Naive thymus-derived CD4-positive, alpha-beta T cell (primary cell): ENCODE measurements at regions of chr3 and their contacts with region 1.

Region 1: DNA sequence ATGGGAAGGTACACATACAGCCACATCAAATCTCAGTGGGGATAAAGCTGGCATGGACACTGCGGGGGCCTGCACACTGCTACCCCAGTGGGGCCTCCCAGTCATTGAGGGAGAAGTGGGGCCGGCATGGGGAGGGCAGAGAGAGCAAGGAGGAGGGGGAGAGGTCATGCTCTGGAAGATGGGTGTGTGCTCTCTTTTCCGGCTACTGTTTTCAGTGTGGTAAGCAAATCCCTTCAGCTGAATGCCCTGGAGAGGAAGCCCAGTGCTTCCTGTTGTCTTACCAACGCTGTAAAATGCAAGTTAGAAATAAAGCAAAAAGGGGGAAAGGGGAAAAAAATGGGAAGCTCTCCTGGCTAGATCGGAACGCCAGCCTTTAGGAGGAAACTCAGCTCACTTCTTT is 30.8 kb downstream of the NRROS start:
- DNase-seq: no peak
- ATAC-seq: peak; percentile 31
- H3K4me3 ChIP-seq: no peak overlapping the region
- H3K4me3 Mint-ChIP-seq: peak overlapping the region; percentile 58 to 79 (median 66)
- H3K27ac ChIP-seq: peak overlapping the region; percentile 34
- H3K27ac Mint-ChIP-seq: peak overlapping the region; percentile 74 to 95 (median 85)
- H3K4me1 ChIP-seq: peaks cover 0 to 7% of the 10 kb centered on the region in 2 donors
- H3K4me1 Mint-ChIP-seq: peaks cover 13 to 41% (median 28%) of the 10 kb centered on the region in 7 donors
- H3K27me3 ChIP-seq: no peaks in the 10 kb centered on the region
- H3K27me3 Mint-ChIP-seq: no peaks in the 10 kb centered on the region

Region 2: GRCh38 chr3:196632046-196632751 is 38.1 kb before region 1 on chr3:
- CTCF ChIA-PET with region 1: no interaction called
- POLR2A ChIA-PET with region 1: interaction called, 18 read pairs
- intact Hi-C with region 1: loop called in 1 of 2 experiments (anchors 5 kb)
- DNase-seq: peak; percentile 69 to 91 (median 88)
- ATAC-seq: peak; percentile 89
- H3K4me3 ChIP-seq: peak overlapping the region; percentile 48
- H3K4me3 Mint-ChIP-seq: peak overlapping the region; percentile 80 to 96 (median 90)
- H3K27ac ChIP-seq: peak overlapping the region; percentile 78
- H3K27ac Mint-ChIP-seq: peak overlapping the region; percentile 93 to 99 (median 97)
- H3K4me1 ChIP-seq: peaks cover 30 to 31% of the 10 kb centered on the region in 2 donors
- H3K4me1 Mint-ChIP-seq: peaks cover 31 to 74% (median 62%) of the 10 kb centered on the region in 7 donors
- H3K27me3 ChIP-seq: no peaks in the 10 kb centered on the region
- H3K27me3 Mint-ChIP-seq: no peaks in the 10 kb centered on the region

Region 3: GRCh38 chr3:196639483-196640296 is 30.6 kb before region 1 on chr3 and contains the start of gene NRROS:
- CTCF ChIA-PET with region 1: interaction called, 4 read pairs
- POLR2A ChIA-PET with region 1: interaction called, 12 read pairs
- intact Hi-C with region 1: loop called in 1 of 2 experiments (anchors 5 kb)
- DNase-seq: peak; percentile 25 to 71 (median 46)
- ATAC-seq: peak; percentile 70
- H3K4me3 ChIP-seq: peak within 1 kb of the TSS; percentile 75
- H3K4me3 Mint-ChIP-seq: peak within 1 kb of the TSS; percentile 75 to 94 (median 92)
- H3K27ac ChIP-seq: peak within 1 kb of the TSS; percentile 79
- H3K27ac Mint-ChIP-seq: peak within 1 kb of the TSS; percentile 74 to 95 (median 92)
- H3K4me1 ChIP-seq: peaks cover 27 to 36% of the 10 kb centered on the region in 2 donors
- H3K4me1 Mint-ChIP-seq: peaks cover 49 to 92% (median 71%) of the 10 kb centered on the region in 7 donors
- H3K27me3 ChIP-seq: no peaks in the 10 kb centered on the region
- H3K27me3 Mint-ChIP-seq: no peaks in the 10 kb centered on the region
- total RNA-seq, gene NRROS: 9.8 to 53.3 (median 14.2) TPM

Region 4: DNA sequence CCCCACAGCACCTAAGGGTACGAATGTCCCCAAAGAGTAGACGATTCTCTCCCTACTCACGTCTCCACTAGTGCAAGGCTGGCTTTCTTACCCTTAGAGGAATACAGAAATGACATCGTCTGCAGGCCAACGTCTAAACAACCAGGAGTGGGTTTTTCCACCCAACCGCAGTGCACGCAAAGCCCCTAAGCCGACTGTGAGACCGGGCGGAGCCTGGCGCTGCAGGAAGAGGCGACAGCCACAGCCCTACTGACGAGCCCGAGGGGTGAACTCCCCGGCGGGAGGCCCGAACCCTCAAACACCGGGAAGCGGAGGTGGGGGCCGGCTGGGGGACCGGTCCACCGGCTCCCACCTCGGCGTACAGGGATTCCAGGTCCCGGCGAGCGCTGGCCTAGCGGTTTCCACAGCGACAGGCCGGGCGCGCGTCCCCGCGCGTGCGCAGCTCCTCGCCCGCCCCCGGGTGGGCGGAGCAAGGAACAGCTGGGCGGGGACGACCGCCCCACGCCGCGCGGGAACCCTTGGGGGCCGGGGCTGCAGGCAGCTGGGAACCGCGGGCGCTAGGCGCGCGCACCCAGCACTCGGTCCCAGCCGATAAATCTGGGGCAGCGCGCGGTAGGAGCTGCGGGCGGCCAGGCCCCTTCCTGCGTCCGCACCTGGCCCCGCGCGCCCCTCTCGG is 41.6 kb after region 1 on chr3 and contains the starts of genes CEP19 and PIGX:
- CTCF ChIA-PET with region 1: no interaction called
- POLR2A ChIA-PET with region 1: no interaction called
- intact Hi-C with region 1: no loop called
- DNase-seq: peak; percentile 92 to 97 (median 94)
- ATAC-seq: peak; percentile 92
- H3K4me3 ChIP-seq: peak within 1 kb of the TSS; percentile 79
- H3K4me3 Mint-ChIP-seq: peak within 1 kb of the TSS; percentile 84 to 98 (median 94)
- H3K27ac ChIP-seq: peak within 1 kb of the TSS; percentile 96
- H3K27ac Mint-ChIP-seq: peak within 1 kb of the TSS; percentile 91 to 99 (median 96)
- H3K4me1 ChIP-seq: peaks cover 12 to 14% of the 10 kb centered on the region in 2 donors
- H3K4me1 Mint-ChIP-seq: peaks cover 16 to 42% (median 34%) of the 10 kb centered on the region in 7 donors
- H3K27me3 ChIP-seq: no peaks in the 10 kb centered on the region
- H3K27me3 Mint-ChIP-seq: no peaks in the 10 kb centered on the region
- total RNA-seq, gene CEP19: 0.96 to 8.1 (median 6.9) TPM
- total RNA-seq, gene PIGX: 13.7 to 58.5 (median 17.3) TPM